ENCODE measurements at regions of chr7 and their contacts with region 1.

Region 1: GRCh38 chr7:124032369-124033094 is at the start of gene TMEM229A:
- DNase-seq: no peak
- H3K4me3 Mint-ChIP-seq: peak within 1 kb of the TSS; percentile 66
- H3K27ac Mint-ChIP-seq: peak within 1 kb of the TSS; percentile 63
- H3K4me1 Mint-ChIP-seq: peaks cover 4% of the 10 kb centered on the region
- H3K27me3 Mint-ChIP-seq: peaks cover 35% of the 10 kb centered on the region
- total RNA-seq, gene TMEM229A: not detected in 2 replicates

Region 2: GRCh38 chr7:122310119-122311021 is 1722.2 kb before region 1 on chr7:
- intact Hi-C with region 1: loop called (anchors 10 kb)
- DNase-seq: no peak
- H3K4me3 Mint-ChIP-seq: no peak overlapping the region
- H3K27ac Mint-ChIP-seq: no peak overlapping the region
- H3K4me1 Mint-ChIP-seq: no peaks in the 10 kb centered on the region
- H3K27me3 Mint-ChIP-seq: peaks cover 60% of the 10 kb centered on the region

Region 3: DNA sequence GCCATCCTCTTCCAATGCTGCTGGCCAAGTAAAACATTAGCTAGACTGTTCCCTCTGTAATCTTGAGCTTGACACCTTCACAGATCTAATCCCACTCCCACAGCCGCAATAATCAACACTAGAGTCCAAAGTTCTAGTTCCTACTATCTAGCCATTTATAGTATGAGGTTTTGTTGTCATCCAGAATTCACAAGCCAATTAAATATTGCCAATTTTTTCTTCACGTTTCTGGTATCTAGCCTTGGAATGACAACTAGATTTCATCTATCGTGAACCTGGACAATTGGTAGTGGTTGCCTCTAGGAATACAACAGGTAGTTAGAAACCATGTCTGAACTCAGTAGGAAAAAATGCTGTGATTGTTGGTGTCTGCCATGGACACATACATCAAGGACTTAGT is 294.2 kb before region 1 on chr7:
- intact Hi-C with region 1: no loop called
- DNase-seq: no peak
- H3K4me3 Mint-ChIP-seq: no peak overlapping the region
- H3K27ac Mint-ChIP-seq: no peak overlapping the region
- H3K4me1 Mint-ChIP-seq: peaks cover 20% of the 10 kb centered on the region
- H3K27me3 Mint-ChIP-seq: no peaks in the 10 kb centered on the region

Region 4: DNA sequence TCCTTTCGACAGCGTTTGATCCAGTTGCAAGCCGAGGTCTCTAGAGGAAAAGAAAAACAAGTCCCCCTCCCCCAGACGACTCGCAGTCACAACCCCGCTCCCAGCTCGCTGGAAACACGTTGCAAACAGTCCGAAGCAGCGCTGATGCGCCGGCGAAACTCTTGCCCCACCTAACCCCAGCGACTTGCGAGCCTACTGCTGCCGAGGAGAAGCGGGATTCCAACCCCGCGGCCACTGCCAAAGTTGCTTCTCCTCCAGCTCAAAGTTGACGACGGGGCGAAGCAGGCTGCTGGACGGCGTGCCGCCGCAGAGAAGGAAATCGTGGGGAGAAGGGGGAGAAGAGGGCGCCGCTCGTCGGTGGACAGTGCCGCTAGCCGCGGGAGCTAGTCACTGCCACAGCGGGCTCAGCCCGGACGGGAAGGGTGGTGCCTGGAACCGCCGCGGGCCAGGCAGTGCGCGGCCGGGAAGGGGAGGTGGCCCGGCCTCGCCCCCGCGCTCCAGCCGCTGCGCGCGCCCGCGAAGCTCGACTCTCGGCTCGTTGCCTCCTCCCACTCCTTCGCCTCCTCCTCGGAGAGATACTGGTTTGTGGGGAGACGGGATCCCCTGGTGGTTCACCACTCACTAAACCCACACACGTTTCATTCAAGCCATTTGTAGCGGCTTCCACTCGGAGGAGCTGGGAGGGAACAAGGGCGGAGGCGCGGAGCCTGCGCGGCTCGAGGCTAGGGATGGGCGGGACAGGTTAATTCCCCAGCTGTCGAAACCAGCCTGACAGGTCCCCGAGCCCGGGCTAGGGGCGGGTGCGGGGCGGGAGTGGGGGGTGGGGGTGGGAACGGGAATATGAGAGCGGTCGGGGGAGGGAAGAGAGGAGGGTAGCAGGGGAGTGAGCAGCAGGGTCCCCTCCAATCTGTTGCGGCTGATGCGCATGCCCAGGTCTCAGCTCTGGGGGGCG is 733.1 kb after region 1 on chr7 and contains the start of gene GPR37:
- intact Hi-C with region 1: loop called (anchors 5 kb)
- DNase-seq: peak; percentile 11
- H3K4me3 Mint-ChIP-seq: peak within 1 kb of the TSS; percentile 80
- H3K27ac Mint-ChIP-seq: no peak within 1 kb of the TSS
- H3K4me1 Mint-ChIP-seq: peaks cover 12% of the 10 kb centered on the region
- H3K27me3 Mint-ChIP-seq: peaks cover 55% of the 10 kb centered on the region
- total RNA-seq, gene GPR37: not detected in 2 replicates

Measured in activated T-helper 1 cell treated with anti-CD3 and anti-CD28 coated beads, Interleukin-12 subunit alpha, Interleukin-12 subunit beta, Interleukin-2, Interleukin-4 antibody, amounts not matched to agents 30 ng/mL and 10 ng/mL and 1 ng/mL, durations not matched to agents 14 hours and 24 hours and 36 hours (primary cell).